PC-9 (cell line): ENCODE measurements at regions of chr1 and their contacts with region 1.

Region 1: GRCh38 chr1:15206418-15207030 is 40.5 kb upstream of the FHAD1 start:
- DNase-seq: peak; percentile 59 to 88
- H3K4me3 ChIP-seq: no peak overlapping the region; the same call in 1 of the 2 replicates
- H3K27ac ChIP-seq: peak overlapping the region; percentile 68
- H3K4me1 ChIP-seq: peaks cover 33% of the 10 kb centered on the region
- H3K27me3 ChIP-seq: no peaks in the 10 kb centered on the region
- CTCF ChIP-seq: no peak

Region 2: GRCh38 chr1:15141935-15142539 is 64.5 kb before region 1 on chr1:
- CTCF ChIA-PET with region 1: no interaction called
- POLR2A ChIA-PET with region 1: no interaction called
- intact Hi-C with region 1: no loop called
- DNase-seq: peak; percentile 29 to 55
- H3K4me3 ChIP-seq: no peak overlapping the region
- H3K27ac ChIP-seq: no peak overlapping the region
- H3K4me1 ChIP-seq: peaks cover 28% of the 10 kb centered on the region
- H3K27me3 ChIP-seq: no peaks in the 10 kb centered on the region
- CTCF ChIP-seq: no peak; the same call in 1 of the 2 replicates

Region 3: DNA sequence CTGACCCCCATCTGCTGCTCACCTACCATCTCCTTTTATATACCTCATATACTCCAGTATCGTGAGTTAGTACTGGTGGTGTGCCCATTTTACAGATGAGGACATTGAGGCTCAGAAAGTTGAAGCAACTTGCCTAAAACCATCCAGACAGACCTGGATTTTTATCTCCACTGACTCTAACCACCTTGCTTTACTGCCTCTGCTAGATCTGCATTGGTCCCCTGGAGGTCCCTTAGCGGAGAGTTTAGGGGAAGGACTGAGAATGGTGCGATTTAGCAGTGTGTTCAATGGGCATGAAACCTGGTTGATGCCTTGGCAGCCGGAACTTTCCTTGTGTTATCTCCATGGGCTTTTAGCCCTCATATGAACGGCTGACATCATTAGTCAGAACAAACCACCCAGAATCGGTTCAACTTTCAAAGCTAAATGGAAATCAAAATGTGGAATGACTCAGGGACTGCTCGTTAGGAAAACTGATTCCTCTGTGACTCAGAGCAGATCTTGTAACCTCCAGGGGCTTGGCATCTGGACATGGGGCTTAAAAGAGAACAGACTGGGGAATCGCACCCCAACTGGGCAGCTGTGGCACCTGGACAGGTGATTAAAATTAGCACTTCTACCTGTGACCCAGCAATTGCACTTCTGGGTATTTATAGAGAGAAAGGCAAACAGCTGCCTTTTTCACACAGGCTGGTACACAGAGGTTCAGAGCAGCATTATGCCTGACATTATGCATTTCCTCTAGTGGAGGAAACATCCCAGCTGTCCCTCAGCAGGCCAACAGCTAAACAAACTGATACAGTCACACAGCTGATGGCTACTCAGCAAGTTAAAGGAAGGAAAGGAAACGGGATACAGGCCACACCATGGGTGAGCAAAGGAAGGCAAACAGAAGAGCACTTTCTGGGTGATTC is 27.7 kb before region 1 on chr1:
- CTCF ChIA-PET with region 1: interaction called, 3 read pairs
- POLR2A ChIA-PET with region 1: no interaction called
- intact Hi-C with region 1: loop called (anchors 2 kb)
- DNase-seq: peak; percentile 61 to 89
- H3K4me3 ChIP-seq: no peak overlapping the region
- H3K27ac ChIP-seq: peak overlapping the region; percentile 83
- H3K4me1 ChIP-seq: peaks cover 25% of the 10 kb centered on the region
- H3K27me3 ChIP-seq: no peaks in the 10 kb centered on the region
- CTCF ChIP-seq: no peak

Region 4: DNA sequence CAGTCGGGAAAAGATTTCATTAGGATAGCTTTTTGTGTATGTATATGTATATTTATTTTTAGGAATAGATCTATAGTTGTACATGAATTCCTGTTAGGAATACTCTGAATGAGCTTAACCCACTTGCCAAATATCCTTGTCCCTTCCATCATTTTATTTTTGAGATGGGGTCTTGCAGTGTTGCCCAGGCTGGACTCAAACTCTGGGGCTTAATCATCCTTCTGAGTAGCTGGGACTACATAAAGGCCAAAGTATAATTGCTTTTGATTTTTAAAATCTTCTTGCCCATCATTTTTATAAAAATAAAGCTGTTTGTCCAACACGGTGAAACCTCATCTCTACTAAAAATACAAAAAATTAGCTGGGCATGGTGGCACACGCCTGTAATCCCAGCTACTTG is 457.4 kb after region 1 on chr1:
- CTCF ChIA-PET with region 1: no interaction called
- POLR2A ChIA-PET with region 1: interaction called, 11 read pairs
- intact Hi-C with region 1: no loop called
- DNase-seq: no peak
- H3K4me3 ChIP-seq: no peak overlapping the region
- H3K27ac ChIP-seq: no peak overlapping the region
- H3K4me1 ChIP-seq: no peaks in the 10 kb centered on the region
- H3K27me3 ChIP-seq: no peaks in the 10 kb centered on the region
- CTCF ChIP-seq: no peak